CD8-positive, alpha-beta T cell (primary cell): ENCODE measurements at regions of chr20 and their contacts with region 1.

Region 1: DNA sequence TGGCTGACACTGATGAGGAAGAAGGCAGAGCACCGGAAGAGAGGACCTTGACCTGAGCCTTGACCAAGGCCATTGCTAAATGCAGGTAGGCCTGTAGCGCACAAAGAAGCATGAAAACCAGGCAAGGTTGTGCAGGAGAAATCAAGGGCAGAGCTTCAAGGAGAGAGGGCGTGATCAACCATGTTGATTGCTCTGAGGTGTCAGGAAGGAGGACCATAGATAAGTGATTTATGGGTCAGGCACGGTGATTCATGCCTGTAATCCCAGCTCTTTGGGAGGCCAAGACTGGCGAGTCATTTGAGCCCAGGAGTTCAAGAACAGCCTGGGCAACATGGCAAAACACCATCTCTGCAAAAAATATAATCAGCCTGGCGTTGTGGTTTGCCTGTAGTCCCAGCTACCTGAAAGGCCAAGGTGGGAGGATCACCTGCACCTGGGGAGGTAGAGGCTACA is 12.4 kb downstream of the PLCG1 start:
- DNase-seq: no peak
- ATAC-seq: no peak
- H3K4me3 ChIP-seq: no peak overlapping the region
- H3K4me3 Mint-ChIP-seq: peak overlapping the region; percentile 29
- H3K27ac ChIP-seq: peak overlapping the region in 1 of 2 experiments; percentile 82
- H3K27ac Mint-ChIP-seq: peak overlapping the region; percentile 98
- H3K4me1 ChIP-seq: peaks cover 100% of the 10 kb centered on the region
- H3K4me1 Mint-ChIP-seq: peaks cover 97% of the 10 kb centered on the region
- H3K27me3 ChIP-seq: no peaks in the 10 kb centered on the region
- H3K27me3 Mint-ChIP-seq: no peaks in the 10 kb centered on the region
- CTCF ChIP-seq: no peak

Region 2: DNA sequence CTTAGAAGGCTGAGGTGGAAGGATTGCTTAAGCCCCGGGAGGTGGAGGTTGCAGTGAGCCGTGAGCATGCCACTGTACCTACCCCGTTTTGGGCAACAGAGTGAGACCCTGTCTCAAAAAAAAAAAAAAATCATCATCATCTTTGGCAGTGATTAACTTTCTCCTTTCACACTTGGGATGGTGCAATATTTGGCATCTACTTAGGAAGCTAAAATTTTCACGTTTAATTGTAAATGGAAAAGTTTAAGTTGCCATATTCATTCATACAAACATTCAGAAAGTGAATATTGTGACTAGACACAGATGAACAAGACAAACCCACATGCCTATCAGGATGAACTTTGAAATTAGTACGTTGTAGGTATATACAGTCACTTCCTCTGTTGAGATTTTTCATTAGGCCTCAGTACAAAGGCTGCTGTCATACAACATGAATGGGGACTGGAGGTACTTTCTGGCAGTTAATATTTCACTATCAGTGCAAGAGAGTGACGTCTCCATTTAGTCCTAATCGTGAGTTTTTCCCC is 110.8 kb before region 1 on chr20:
- CTCF ChIA-PET with region 1: no interaction called
- POLR2A ChIA-PET with region 1: no interaction called
- intact Hi-C with region 1: loop called in 1 of 2 experiments (anchors 1 kb)
- DNase-seq: no peak
- ATAC-seq: peak; percentile 47
- H3K4me3 ChIP-seq: no peak overlapping the region
- H3K4me3 Mint-ChIP-seq: no peak overlapping the region
- H3K27ac ChIP-seq: no peak overlapping the region
- H3K27ac Mint-ChIP-seq: no peak overlapping the region
- H3K4me1 ChIP-seq: peaks cover 65% of the 10 kb centered on the region
- H3K4me1 Mint-ChIP-seq: peaks cover 90% of the 10 kb centered on the region
- H3K27me3 ChIP-seq: no peaks in the 10 kb centered on the region
- H3K27me3 Mint-ChIP-seq: no peaks in the 10 kb centered on the region
- CTCF ChIP-seq: no peak

Region 3: DNA sequence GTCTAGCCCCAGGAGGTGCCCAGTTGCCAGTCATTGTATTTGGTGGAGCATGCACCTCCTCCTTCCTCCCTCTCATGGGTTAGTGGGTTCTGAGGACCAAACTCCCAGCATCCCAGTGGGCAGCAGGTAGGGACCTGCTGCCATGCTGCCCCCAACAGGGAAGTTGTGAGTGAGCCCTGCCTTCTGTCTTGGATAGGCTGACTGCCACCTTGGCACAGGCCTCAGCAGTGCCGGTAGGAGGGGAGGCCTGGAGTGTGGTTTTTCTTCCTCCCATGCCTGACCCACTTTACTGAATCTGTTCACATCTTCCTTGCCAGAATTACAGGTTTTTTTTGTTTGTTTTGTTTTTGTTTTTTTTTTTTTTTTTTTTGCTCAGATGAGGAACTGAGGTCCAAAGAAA is 12.2 kb after region 1 on chr20:
- CTCF ChIA-PET with region 1: interaction called, 94 read pairs
- POLR2A ChIA-PET with region 1: interaction called, 317 read pairs
- intact Hi-C with region 1: loop called in 1 of 2 experiments (anchors 1 kb)
- DNase-seq: peak in 3 of 9 experiments; percentile 25 to 49 (median 45)
- ATAC-seq: no peak
- H3K4me3 ChIP-seq: no peak overlapping the region
- H3K4me3 Mint-ChIP-seq: peak overlapping the region; percentile 58
- H3K27ac ChIP-seq: peak overlapping the region; percentile 39 to 82
- H3K27ac Mint-ChIP-seq: peak overlapping the region; percentile 92
- H3K4me1 ChIP-seq: peaks cover 88% of the 10 kb centered on the region
- H3K4me1 Mint-ChIP-seq: peaks cover 86% of the 10 kb centered on the region
- H3K27me3 ChIP-seq: no peaks in the 10 kb centered on the region
- H3K27me3 Mint-ChIP-seq: no peaks in the 10 kb centered on the region
- CTCF ChIP-seq: no peak